ENCODE measurements at regions of chr5 and their contacts with region 1.

Region 1: DNA sequence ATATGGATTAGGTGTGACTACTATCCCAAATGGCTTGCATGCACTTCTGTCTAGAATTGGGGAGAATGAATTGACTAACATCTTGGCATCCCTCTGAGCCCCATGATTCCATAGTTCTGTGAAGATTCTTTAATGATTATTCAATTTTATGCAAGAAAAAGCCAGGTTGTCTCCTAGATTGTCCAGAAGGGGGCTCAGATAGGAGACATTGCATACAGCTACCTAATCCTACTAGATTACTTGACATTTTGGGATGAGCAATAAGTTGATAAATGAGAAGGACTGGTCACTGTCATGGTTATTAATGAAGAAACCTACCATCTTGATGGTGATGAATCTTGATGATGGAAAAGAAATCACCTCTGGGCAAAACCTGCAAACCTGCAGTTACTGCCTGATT is 117.0 kb downstream of the CARTPT start:
- DNase-seq: peak; percentile 26
- H3K4me3 ChIP-seq: no peak overlapping the region
- H3K27ac ChIP-seq: no peak overlapping the region
- H3K4me1 ChIP-seq: no peaks in the 10 kb centered on the region
- H3K27me3 ChIP-seq: peaks cover 10 to 11% of the 10 kb centered on the region in 2 experiments
- CTCF ChIP-seq: peak in 1 of 2 donors; percentile 25
- POLR2A ChIP-seq: no peak

Region 2: DNA sequence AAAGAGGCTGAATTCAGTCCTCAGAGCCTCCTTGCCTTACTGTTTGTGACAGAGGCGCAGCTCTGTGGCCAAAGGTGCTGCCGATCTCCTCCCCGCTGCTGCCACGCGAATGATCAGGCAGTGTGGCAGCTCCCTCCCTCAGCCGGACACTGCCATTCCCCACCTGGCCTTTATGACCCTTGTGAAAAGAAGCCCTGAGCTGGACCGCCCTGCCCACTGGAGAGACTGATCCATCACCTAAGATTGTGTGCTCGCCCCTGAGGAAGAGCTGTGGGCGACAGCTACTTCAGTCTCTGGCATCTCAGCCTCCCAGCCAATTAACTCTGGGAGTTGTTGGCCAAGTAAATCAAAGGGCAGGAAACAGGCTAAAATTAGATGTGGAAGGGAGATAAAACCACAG is 26.1 kb before region 1 on chr5:
- CTCF ChIA-PET with region 1: no interaction called
- POLR2A ChIA-PET with region 1: no interaction called
- dilution Hi-C with region 1: no loop called
- intact Hi-C with region 1: no loop called
- DNase-seq: no peak
- H3K4me3 ChIP-seq: no peak overlapping the region
- H3K27ac ChIP-seq: no peak overlapping the region
- H3K4me1 ChIP-seq: no peaks in the 10 kb centered on the region
- H3K27me3 ChIP-seq: peaks cover 25 to 36% of the 10 kb centered on the region in 2 experiments
- CTCF ChIP-seq: no peak
- POLR2A ChIP-seq: no peak

Region 3: DNA sequence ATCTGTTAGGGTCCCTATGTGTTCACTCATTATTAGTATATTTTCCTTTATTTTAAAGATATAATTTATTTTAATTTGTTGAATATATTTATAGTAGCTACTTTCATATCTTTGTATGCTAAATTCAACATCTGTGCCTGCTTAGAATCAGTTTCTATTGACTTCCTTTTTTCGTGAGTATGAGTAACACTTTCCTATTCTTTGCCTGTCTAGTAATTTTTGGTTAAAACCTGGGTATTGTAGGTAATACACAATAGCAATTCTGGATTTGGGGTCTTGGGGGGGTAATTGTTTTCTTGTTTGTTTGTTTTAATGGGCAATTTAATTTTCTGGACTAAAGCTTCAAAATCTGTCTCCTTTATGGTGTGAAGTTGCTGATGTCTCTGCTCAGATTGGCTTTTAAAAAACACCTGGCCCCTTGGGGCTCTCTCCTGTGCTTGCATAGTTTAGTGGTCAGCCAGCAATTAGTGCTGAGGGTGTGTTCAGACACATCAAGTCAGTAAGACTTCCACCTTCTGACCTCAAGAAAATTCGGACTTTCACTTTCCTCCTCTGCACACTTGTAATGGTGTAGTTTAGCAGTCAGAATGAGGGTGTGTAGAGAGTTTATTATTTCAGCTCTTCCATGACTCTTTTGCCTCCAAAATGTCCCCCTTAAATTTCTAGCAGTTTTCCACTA is 146.8 kb after region 1 on chr5:
- CTCF ChIA-PET with region 1: no interaction called
- POLR2A ChIA-PET with region 1: no interaction called
- dilution Hi-C with region 1: no loop called
- intact Hi-C with region 1: no loop called
- DNase-seq: no peak
- H3K4me3 ChIP-seq: no peak overlapping the region
- H3K27ac ChIP-seq: no peak overlapping the region
- H3K4me1 ChIP-seq: no peaks in the 10 kb centered on the region
- H3K27me3 ChIP-seq: peaks cover 2 to 16% of the 10 kb centered on the region in 2 experiments
- CTCF ChIP-seq: no peak
- POLR2A ChIP-seq: no peak

Region 4: GRCh38 chr5:72018146-72018803 is 182.2 kb after region 1 on chr5:
- CTCF ChIA-PET with region 1: interaction called, 27 read pairs
- POLR2A ChIA-PET with region 1: no interaction called
- dilution Hi-C with region 1: no loop called
- intact Hi-C with region 1: no loop called
- DNase-seq: peak; percentile 64
- H3K4me3 ChIP-seq: no peak overlapping the region
- H3K27ac ChIP-seq: no peak overlapping the region
- H3K4me1 ChIP-seq: no peaks in the 10 kb centered on the region
- H3K27me3 ChIP-seq: peaks cover 19 to 38% of the 10 kb centered on the region in 2 experiments
- CTCF ChIP-seq: peak; percentile 88 to 94
- POLR2A ChIP-seq: no peak